ENCODE measurements at regions of chr17 and their contacts with region 1.

Region 1: DNA sequence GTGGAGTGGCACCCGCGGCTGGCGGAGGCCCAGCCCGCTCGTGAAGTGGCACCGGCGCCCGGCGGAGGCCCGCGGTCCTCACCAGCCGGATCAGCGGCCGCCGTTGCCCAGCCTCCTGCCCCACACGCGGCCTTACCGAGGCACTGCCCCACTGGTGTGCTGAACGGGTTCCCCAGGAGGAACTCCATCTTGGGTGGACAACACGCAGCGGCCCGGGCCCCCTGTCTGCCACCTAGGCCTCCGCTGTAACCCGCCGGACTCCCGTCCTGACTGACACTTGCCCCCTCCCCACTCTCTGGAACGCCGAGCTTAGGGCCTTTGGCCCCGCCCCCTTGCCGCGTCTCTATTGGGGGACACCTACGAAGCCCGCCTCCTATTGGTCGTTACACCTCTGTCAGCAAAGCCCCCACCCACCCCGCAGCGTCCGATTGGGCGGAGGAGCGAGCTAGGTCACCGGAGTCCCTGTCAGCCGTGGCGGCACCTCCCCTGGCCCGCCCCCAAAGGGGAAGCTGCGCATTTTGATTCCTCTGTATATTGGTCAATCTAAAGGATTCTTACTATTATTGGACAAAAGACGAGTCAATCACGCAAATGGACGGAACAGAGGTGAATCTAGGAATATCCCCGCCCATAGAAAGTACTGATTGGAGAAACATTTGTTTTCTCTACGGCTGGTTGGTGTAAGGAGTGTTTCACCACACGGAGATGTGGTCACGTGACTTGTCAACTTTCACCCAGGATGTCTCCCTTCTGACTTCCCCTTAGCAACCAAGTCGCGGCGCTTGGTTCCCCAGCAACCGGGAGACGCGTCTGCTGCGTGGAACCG is at the starts of genes DRC3 and TOM1L2:
- DNase-seq: peak; percentile 100
- ATAC-seq: peak; percentile 98
- H3K4me3 ChIP-seq: peak within 1 kb of the TSS; percentile 89
- H3K27ac ChIP-seq: peak within 1 kb of the TSS; percentile 68
- H3K4me1 ChIP-seq: peaks cover 6% of the 10 kb centered on the region
- H3K27me3 ChIP-seq: no peaks in the 10 kb centered on the region
- total RNA-seq, gene DRC3: 1.4 to 3.2 (median 2.3) TPM
- total RNA-seq, gene TOM1L2: 196 to 248 (median 227) TPM

Region 2: DNA sequence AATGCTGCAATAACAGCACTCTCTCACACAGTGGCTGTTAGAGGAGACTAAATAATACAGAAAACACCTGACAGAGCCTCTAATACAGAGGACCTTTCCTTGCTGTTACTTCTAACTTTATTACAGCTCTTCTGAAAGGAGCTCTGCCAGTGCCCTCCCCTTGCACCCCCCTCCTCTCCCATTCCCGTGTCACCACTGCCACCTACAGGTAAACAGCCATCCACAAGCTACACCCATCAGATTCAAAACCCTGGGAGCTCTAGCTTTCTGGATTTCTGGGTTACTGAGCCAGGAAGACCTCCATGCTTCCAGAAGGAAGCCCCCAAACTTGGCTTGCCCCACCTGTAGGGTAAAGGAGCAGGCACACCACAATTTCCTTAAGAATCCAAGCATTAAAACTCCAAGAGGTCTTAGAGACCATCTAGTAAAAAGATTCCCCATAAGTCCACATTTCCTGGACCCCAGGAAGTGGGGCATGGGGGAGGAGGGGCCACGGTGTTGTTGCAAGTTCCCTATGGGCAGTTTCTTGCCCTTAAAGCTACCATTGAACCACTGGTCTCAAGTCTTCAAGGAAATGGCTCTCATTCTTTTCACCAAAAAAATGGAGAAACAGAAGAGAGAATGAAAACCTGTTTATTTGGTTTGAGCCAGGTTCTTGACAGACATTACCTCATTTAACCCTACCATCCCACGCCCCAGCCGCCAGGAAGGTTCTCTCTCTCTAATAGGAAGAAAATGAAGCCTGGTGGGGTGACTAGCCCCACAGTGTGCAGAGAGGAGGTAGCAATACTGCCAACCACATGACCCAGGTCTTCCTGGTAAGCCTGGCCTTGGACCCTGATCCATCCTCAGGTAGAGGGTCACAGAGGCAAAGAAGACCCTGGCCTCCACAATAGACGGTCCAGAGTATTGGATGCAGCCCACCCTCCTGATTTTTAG is 52.9 kb before region 1 on chr17:
- intact Hi-C with region 1: loop called in 1 of 4 experiments (anchors 10 kb)
- DNase-seq: peak; percentile 69 to 85 (median 83)
- ATAC-seq: peak; percentile 81 to 83
- H3K4me3 ChIP-seq: no peak overlapping the region
- H3K27ac ChIP-seq: peak overlapping the region; percentile 24
- H3K4me1 ChIP-seq: peaks cover 12% of the 10 kb centered on the region
- H3K27me3 ChIP-seq: no peaks in the 10 kb centered on the region

Measured in right cardiac atrium (tissue), 5 donors.